CD4-positive, alpha-beta T cell (primary cell): ENCODE measurements at regions of chr19 and their contacts with region 1.

Region 1: DNA sequence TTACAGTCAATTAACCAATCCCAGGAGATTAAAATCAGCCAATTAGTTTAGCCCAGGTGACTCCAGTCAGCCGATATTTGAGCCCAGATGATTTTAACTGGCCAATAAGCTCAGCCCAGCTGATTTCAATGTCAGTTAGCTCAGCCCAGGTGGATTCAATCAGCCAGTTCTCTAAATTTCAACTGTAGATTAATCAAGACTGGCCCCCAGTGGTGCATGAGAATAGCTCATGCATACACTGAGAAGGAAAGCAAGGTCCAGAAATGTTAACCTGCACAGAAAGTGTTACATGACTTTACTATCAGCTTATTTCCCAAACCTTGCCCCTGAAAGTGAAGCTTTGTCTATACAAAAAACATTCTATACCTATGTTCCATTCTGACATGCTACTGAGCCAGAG is 55.4 kb upstream of the ZNF724 start:
- DNase-seq: no peak
- ATAC-seq: no peak
- H3K4me3 ChIP-seq: no peak overlapping the region
- H3K4me3 Mint-ChIP-seq: no peak overlapping the region
- H3K27ac ChIP-seq: no peak overlapping the region
- H3K27ac Mint-ChIP-seq: no peak overlapping the region
- H3K4me1 ChIP-seq: no peaks in the 10 kb centered on the region
- H3K4me1 Mint-ChIP-seq: no peaks in the 10 kb centered on the region
- H3K27me3 ChIP-seq: peaks cover 0 to 4% of the 10 kb centered on the region in 2 experiments
- H3K27me3 Mint-ChIP-seq: no peaks in the 10 kb centered on the region
- CTCF ChIP-seq: peak; percentile 26

Region 2: GRCh38 chr19:22823030-22823429 is 482.5 kb before region 1 on chr19:
- CTCF ChIA-PET with region 1: no interaction called
- POLR2A ChIA-PET with region 1: no interaction called
- intact Hi-C with region 1: loop called in 1 of 2 experiments (anchors 5 kb)
- DNase-seq: no peak
- ATAC-seq: no peak
- H3K4me3 ChIP-seq: no peak overlapping the region
- H3K4me3 Mint-ChIP-seq: no peak overlapping the region
- H3K27ac ChIP-seq: no peak overlapping the region
- H3K27ac Mint-ChIP-seq: no peak overlapping the region
- H3K4me1 ChIP-seq: no peaks in the 10 kb centered on the region
- H3K4me1 Mint-ChIP-seq: no peaks in the 10 kb centered on the region
- H3K27me3 ChIP-seq: no peaks in the 10 kb centered on the region
- H3K27me3 Mint-ChIP-seq: no peaks in the 10 kb centered on the region
- CTCF ChIP-seq: no peak